ENCODE measurements at regions of chr7 and their contacts with region 1.

Region 1: GRCh38 chr7:103679151-103680132 is 233.4 kb upstream of the SLC26A5 start:
- DNase-seq: peak; percentile 35
- ATAC-seq: no peak
- H3K4me3 ChIP-seq: no peak overlapping the region
- H3K27ac ChIP-seq: peak overlapping the region; percentile 9
- H3K4me1 ChIP-seq: peaks cover 30% of the 10 kb centered on the region
- H3K27me3 ChIP-seq: no peaks in the 10 kb centered on the region
- CTCF ChIP-seq: no peak
- EP300 ChIP-seq: no peak
- POLR2A ChIP-seq: no peak
- RAD21 ChIP-seq: no peak

Region 2: DNA sequence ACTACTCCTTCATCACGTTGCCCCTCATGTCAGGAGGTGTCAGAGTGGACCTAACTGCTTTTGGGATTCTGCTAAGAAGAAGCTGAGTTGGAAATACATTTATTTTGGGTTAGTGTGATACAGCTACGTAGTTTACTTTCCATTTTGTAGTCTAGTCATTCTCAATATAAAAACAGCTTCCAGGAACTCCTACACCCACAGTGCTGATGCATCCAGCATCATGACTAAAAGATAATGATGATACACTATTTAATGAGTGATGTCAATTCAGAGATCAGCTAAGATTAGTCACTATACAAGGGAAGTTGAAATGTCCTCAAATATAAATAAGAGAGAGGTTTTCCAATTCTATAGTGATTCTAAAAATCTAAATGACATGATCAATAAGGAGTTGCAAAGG is 30.8 kb after region 1 on chr7:
- CTCF ChIA-PET with region 1: no interaction called
- POLR2A ChIA-PET with region 1: no interaction called
- in situ Hi-C with region 1: no loop called
- intact Hi-C with region 1: loop called (anchors 5 kb)
- DNase-seq: no peak
- ATAC-seq: no peak
- H3K4me3 ChIP-seq: no peak overlapping the region
- H3K27ac ChIP-seq: no peak overlapping the region
- H3K4me1 ChIP-seq: peaks cover 24% of the 10 kb centered on the region
- H3K27me3 ChIP-seq: no peaks in the 10 kb centered on the region
- CTCF ChIP-seq: no peak
- EP300 ChIP-seq: no peak
- POLR2A ChIP-seq: no peak
- RAD21 ChIP-seq: no peak